Naive thymus-derived CD4-positive, alpha-beta T cell (primary cell): ENCODE measurements at regions of chr22 and their contacts with region 1.

Region 1: GRCh38 chr22:20507253-20508066 is at the start of gene MED15:
- DNase-seq: peak; percentile 69 to 87 (median 83)
- ATAC-seq: peak; percentile 92
- H3K4me3 ChIP-seq: peak within 1 kb of the TSS; percentile 92
- H3K4me3 Mint-ChIP-seq: peak within 1 kb of the TSS; percentile 96 to 100 (median 98)
- H3K27ac ChIP-seq: peak within 1 kb of the TSS; percentile 95
- H3K27ac Mint-ChIP-seq: peak within 1 kb of the TSS; percentile 90 to 99 (median 96)
- H3K4me1 ChIP-seq: peaks cover 32 to 37% of the 10 kb centered on the region in 2 donors
- H3K4me1 Mint-ChIP-seq: peaks cover 44 to 58% (median 55%) of the 10 kb centered on the region in 7 donors
- H3K27me3 ChIP-seq: no peaks in the 10 kb centered on the region
- H3K27me3 Mint-ChIP-seq: no peaks in the 10 kb centered on the region
- total RNA-seq, gene MED15: 169 to 235 (median 201) TPM

Region 2: GRCh38 chr22:19787441-19788141 is 719.9 kb before region 1 on chr22:
- CTCF ChIA-PET with region 1: no interaction called
- POLR2A ChIA-PET with region 1: no interaction called
- intact Hi-C with region 1: no loop called
- DNase-seq: no peak
- ATAC-seq: no peak
- H3K4me3 ChIP-seq: no peak overlapping the region
- H3K4me3 Mint-ChIP-seq: no peak overlapping the region
- H3K27ac ChIP-seq: no peak overlapping the region
- H3K27ac Mint-ChIP-seq: peak overlapping the region in 1 of 9 donors; percentile 45
- H3K4me1 ChIP-seq: no peaks in the 10 kb centered on the region
- H3K4me1 Mint-ChIP-seq: peaks cover 0 to 3% (median 0%) of the 10 kb centered on the region in 7 donors
- H3K27me3 ChIP-seq: no peaks in the 10 kb centered on the region
- H3K27me3 Mint-ChIP-seq: no peaks in the 10 kb centered on the region

Region 3: DNA sequence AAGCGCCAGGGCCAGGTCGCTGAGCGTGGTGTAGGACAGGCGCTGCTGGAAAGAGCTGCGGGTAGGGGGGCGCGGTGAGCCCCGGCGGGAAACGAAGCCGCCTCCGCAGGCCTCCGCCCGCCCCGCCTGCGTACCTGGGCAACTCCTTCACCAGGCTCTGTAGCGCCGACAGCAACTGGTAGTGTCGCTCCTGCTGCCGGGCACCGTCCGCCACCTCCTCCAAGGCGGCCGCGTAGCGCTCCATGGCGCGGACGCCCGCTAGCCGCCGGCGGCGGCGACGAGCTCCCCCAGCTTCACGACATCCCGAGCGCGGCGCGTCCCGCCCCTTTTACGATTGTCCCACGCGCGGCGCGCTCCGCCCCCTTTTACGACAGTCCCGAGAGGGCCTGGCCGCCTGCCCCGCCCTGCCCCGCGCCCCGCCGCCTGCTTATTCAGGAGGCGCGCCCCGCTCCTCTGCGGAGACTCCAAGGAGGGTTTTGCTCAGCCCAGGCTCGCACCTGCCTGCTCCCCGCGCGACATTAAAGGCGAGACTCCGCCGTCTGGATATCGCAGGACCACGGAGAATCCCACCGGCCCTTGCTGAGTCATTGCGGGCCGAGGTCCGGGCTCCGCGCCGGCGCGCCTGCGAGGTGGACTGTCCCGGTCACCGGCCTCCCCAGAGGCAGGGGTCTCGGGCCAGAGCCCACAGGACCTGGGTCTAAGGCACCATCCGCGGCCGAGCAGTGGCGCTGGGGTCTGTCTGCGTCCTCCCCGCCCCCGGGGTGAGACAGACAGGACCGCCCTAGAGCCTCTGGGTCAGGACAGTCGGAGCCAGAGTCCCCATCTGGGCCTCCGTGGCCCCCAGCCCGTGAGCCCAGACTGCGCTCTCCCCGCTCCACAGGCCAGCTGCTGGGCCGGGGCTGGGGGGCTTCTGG is 187.5 kb before region 1 on chr22 and contains the start of gene DGCR6L:
- CTCF ChIA-PET with region 1: no interaction called
- POLR2A ChIA-PET with region 1: no interaction called
- intact Hi-C with region 1: loop called in 1 of 2 experiments (anchors 5 kb)
- DNase-seq: peak; percentile 92 to 98 (median 95)
- ATAC-seq: peak; percentile 96
- H3K4me3 ChIP-seq: peak within 1 kb of the TSS; percentile 91
- H3K4me3 Mint-ChIP-seq: peak within 1 kb of the TSS; percentile 83 to 98 (median 92)
- H3K27ac ChIP-seq: peak within 1 kb of the TSS; percentile 89
- H3K27ac Mint-ChIP-seq: peak within 1 kb of the TSS; percentile 76 to 95 (median 89)
- H3K4me1 ChIP-seq: peaks cover 20 to 53% of the 10 kb centered on the region in 2 donors
- H3K4me1 Mint-ChIP-seq: peaks cover 28 to 70% (median 58%) of the 10 kb centered on the region in 7 donors
- H3K27me3 ChIP-seq: no peaks in the 10 kb centered on the region
- H3K27me3 Mint-ChIP-seq: no peaks in the 10 kb centered on the region
- total RNA-seq, gene DGCR6L: 29.4 to 55.3 (median 43.7) TPM

Region 4: DNA sequence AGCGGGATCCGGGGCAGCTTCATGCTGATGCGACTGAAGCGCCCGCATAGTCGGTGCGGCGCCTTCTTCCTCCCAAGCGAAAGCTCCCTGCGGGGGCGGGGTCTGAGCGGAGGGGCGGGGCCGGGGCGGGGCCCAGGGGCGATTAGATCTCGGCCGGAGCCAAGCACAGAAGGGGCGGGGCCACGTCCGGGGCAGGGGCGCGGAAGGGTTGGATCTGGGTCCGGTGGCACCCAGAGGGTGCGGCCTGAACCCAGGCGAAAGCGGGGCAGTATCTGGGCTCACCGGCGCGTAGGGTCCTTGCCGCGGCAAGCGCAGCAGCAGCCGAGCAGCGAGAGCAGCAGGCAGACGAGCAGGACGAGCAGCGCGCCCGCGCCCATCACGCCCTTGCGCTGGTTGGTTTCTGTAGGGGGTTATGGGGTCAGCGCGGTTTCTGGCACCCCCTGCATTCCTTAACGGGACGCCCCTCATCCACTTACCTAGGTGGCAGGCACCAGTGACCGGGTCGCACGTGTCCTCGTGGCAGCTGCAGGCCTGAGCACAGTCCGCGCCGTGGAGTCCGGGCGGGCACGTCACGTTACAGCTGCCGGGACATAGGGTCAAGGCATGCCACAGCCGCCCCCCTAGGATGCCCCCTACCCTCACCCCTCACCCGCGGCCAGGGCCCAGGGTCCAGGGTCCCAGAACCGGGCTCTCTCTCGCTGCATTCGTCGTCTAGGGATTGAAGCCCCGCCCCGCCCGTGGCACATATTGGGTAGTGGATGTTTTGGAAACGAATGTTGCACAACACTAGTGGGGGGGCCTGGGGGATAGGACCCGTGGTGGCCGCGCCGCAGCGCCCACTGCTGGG is 78.0 kb before region 1 on chr22:
- CTCF ChIA-PET with region 1: no interaction called
- POLR2A ChIA-PET with region 1: interaction called, 7 read pairs
- intact Hi-C with region 1: loop called in 1 of 2 experiments (anchors 2 kb)
- DNase-seq: peak; percentile 56 to 86 (median 75)
- ATAC-seq: peak; percentile 87
- H3K4me3 ChIP-seq: peak overlapping the region; percentile 79
- H3K4me3 Mint-ChIP-seq: peak overlapping the region; percentile 82 to 96 (median 86)
- H3K27ac ChIP-seq: no peak overlapping the region
- H3K27ac Mint-ChIP-seq: peak overlapping the region; percentile 11 to 80 (median 62)
- H3K4me1 ChIP-seq: peaks cover 17 to 26% of the 10 kb centered on the region in 2 donors
- H3K4me1 Mint-ChIP-seq: peaks cover 6 to 22% (median 13%) of the 10 kb centered on the region in 7 donors
- H3K27me3 ChIP-seq: peaks cover 0 to 12% of the 10 kb centered on the region in 2 donors
- H3K27me3 Mint-ChIP-seq: peaks cover 18 to 66% (median 22%) of the 10 kb centered on the region in 5 donors

Region 5: DNA sequence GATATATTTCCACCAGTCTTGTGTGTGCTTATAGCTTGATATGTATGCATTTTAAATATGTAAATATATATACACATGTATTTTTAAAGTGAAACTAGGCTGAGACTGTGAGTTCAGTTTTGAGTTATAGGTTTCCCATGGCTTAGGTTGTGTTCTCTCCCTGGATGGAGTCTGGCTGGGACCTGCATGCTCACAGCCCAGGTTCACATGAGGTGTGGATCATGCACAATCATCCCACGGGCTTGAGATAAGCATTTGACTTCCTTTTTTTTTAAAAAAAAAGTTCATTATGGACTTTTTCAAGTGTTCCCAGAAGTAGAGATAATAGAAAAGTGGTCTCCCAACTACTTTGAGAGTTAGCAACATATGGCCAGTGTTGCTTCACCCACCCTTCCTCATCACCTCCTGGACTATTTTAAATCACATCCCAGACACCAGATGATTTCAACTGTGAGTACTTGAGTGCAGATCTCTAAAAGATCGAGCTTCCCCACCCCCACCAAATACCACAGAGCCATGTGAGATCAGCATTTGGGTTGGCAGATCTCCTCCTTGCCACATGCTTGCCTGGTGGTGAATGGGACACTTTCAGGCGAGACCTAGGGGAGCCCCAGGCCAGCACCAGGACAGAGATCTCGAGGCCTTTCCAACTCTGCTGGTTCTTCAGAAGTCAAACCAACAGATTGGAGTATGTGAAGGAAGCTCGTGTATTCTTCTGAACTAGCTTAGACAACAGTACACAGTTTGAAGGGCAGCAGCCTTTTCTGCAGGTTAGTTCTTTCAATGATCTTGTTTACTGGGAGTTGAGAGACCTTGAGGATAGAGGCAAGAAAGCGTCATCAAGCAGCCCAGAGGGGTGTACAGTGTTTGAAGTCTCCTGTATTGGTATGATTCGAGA is 15.9 kb after region 1 on chr22:
- CTCF ChIA-PET with region 1: interaction called, 3 read pairs
- POLR2A ChIA-PET with region 1: interaction called, 6 read pairs
- intact Hi-C with region 1: loop called in 1 of 2 experiments (anchors 2 kb)
- DNase-seq: peak in 2 of 9 donors; percentile 2 to 11
- ATAC-seq: peak; percentile 59
- H3K4me3 ChIP-seq: no peak overlapping the region
- H3K4me3 Mint-ChIP-seq: peak overlapping the region; percentile 50 to 82 (median 66)
- H3K27ac ChIP-seq: peak overlapping the region; percentile 54
- H3K27ac Mint-ChIP-seq: peak overlapping the region; percentile 74 to 91 (median 86)
- H3K4me1 ChIP-seq: peaks cover 16 to 29% of the 10 kb centered on the region in 2 donors
- H3K4me1 Mint-ChIP-seq: peaks cover 48 to 79% (median 76%) of the 10 kb centered on the region in 7 donors
- H3K27me3 ChIP-seq: no peaks in the 10 kb centered on the region
- H3K27me3 Mint-ChIP-seq: no peaks in the 10 kb centered on the region

Region 6: GRCh38 chr22:20558567-20559205 is 51.2 kb after region 1 on chr22:
- CTCF ChIA-PET with region 1: interaction called, 5 read pairs
- POLR2A ChIA-PET with region 1: interaction called, 65 read pairs
- intact Hi-C with region 1: loop called (anchors 1 to 2 kb)
- DNase-seq: no peak
- ATAC-seq: no peak
- H3K4me3 ChIP-seq: no peak overlapping the region
- H3K4me3 Mint-ChIP-seq: peak overlapping the region in 6 of 10 donors; percentile 15 to 87 (median 80)
- H3K27ac ChIP-seq: peak overlapping the region; percentile 47
- H3K27ac Mint-ChIP-seq: peak overlapping the region; percentile 90 to 99 (median 98)
- H3K4me1 ChIP-seq: peaks cover 53 to 59% of the 10 kb centered on the region in 2 donors
- H3K4me1 Mint-ChIP-seq: peaks cover 52 to 84% (median 78%) of the 10 kb centered on the region in 7 donors
- H3K27me3 ChIP-seq: no peaks in the 10 kb centered on the region
- H3K27me3 Mint-ChIP-seq: no peaks in the 10 kb centered on the region

Region 7: DNA sequence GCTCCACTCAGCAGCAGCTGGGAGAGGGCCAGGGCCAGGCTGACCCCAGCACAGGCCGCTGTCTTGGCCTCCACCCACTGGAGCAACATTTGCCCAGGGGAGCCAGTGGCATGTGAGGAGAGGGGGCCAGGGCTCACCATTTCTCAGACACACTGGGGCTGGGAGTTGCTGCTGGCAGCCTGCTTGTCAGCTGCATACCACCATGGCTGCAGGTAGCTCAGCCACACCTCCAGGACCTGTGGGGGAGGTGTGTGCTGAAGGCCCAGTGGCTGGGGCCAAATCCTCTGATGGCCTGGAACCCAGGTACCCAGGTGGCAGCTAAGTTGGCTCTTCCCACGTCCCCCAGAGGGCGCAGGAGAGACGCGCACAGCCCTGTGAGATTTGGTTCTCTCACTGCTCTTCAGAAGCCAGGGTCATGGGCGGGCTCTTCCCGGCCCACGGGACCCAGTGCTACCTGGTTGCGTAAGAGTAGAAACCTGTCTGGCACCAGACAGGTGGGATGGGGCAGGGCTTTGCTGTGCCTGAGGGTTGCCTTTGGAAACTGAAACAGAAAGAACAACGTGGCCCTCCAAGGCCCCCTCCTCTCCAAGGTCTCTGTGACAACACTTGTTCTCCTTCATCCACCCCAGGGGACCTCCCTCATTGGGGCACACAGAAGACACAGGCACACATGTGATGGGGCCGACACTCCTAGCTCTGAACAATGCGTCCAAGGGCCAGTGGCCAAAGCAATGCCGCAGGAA is 98.8 kb after region 1 on chr22:
- CTCF ChIA-PET with region 1: no interaction called
- POLR2A ChIA-PET with region 1: no interaction called
- intact Hi-C with region 1: loop called in 1 of 2 experiments (anchors 1 kb)
- DNase-seq: peak; percentile 47 to 74 (median 71)
- ATAC-seq: peak; percentile 90
- H3K4me3 ChIP-seq: no peak overlapping the region
- H3K4me3 Mint-ChIP-seq: peak overlapping the region in 5 of 10 donors; percentile 17 to 69 (median 42)
- H3K27ac ChIP-seq: no peak overlapping the region
- H3K27ac Mint-ChIP-seq: peak overlapping the region in 4 of 9 donors; percentile 22 to 76 (median 29)
- H3K4me1 ChIP-seq: peaks cover 5 to 10% of the 10 kb centered on the region in 2 donors
- H3K4me1 Mint-ChIP-seq: peaks cover 3 to 25% (median 17%) of the 10 kb centered on the region in 7 donors
- H3K27me3 ChIP-seq: no peaks in the 10 kb centered on the region
- H3K27me3 Mint-ChIP-seq: peaks cover 0 to 2% (median 0%) of the 10 kb centered on the region in 5 donors

Region 8: DNA sequence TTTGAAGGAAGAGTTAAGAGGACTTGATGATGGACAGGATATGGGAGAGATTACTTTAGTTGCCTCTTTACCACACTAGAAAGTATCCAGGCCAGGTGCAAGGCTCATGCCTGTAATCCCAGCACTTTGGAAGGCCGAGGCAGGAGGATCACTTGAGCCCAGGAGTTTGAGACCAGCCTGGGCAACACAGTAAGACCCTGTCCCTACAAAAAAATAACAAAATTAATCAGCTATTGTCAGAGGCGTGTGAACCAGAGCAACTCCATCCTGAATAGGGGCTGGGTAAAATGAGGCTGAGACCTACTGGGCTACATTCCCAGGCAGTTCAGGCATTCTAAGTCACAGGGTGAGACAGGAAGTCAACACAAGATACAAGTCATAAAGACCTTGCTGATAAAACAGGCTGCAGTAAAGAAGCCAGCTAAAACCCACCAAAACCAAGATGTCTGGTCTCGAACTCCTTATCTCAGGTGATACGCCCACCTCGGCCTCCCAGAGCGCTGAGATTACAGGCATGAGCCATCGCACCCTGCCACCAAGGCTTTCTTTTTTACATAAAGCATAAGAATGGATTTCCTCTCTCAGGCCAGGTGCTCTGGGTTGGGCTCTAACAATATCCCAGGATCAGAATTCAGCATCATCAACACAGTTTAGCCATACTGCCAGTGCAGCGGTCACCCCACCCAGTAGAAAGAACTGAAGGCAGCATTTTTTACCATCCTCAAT is 333.3 kb after region 1 on chr22:
- CTCF ChIA-PET with region 1: no interaction called
- POLR2A ChIA-PET with region 1: no interaction called
- intact Hi-C with region 1: no loop called
- DNase-seq: no peak
- ATAC-seq: no peak
- H3K4me3 ChIP-seq: no peak overlapping the region
- H3K4me3 Mint-ChIP-seq: peak overlapping the region in 8 of 10 donors; percentile 2 to 61 (median 18)
- H3K27ac ChIP-seq: no peak overlapping the region
- H3K27ac Mint-ChIP-seq: peak overlapping the region; percentile 8 to 86 (median 53)
- H3K4me1 ChIP-seq: peaks cover 0 to 24% of the 10 kb centered on the region in 2 donors
- H3K4me1 Mint-ChIP-seq: peaks cover 27 to 77% (median 69%) of the 10 kb centered on the region in 7 donors
- H3K27me3 ChIP-seq: no peaks in the 10 kb centered on the region
- H3K27me3 Mint-ChIP-seq: no peaks in the 10 kb centered on the region